PC-9 (cell line): ENCODE measurements at regions of chr4 and their contacts with region 1.

Region 1: GRCh38 chr4:8609824-8610350 is 17.3 kb downstream of the CPZ start:
- DNase-seq: no peak
- H3K4me3 ChIP-seq: no peak overlapping the region
- H3K27ac ChIP-seq: no peak overlapping the region
- H3K4me1 ChIP-seq: no peaks in the 10 kb centered on the region
- H3K27me3 ChIP-seq: no peaks in the 10 kb centered on the region
- CTCF ChIP-seq: no peak

Region 2: GRCh38 chr4:8646296-8647093 is 36.6 kb after region 1 on chr4:
- CTCF ChIA-PET with region 1: interaction called, 13 read pairs
- POLR2A ChIA-PET with region 1: no interaction called
- intact Hi-C with region 1: no loop called
- DNase-seq: peak in 1 of 2 experiments; percentile 70
- H3K4me3 ChIP-seq: no peak overlapping the region
- H3K27ac ChIP-seq: no peak overlapping the region
- H3K4me1 ChIP-seq: peaks cover 12% of the 10 kb centered on the region; the same call in 1 of the 2 replicates
- H3K27me3 ChIP-seq: peaks cover 43% of the 10 kb centered on the region
- CTCF ChIP-seq: no peak